Dorsolateral prefrontal cortex (tissue), 120 donors: ENCODE measurements at regions of chr14 and their contacts with region 1.

Region 1: GRCh38 chr14:69260861-69261564 is 1.1 kb downstream of the GALNT16 start:
- DNase-seq: peak in 3 of 10 donors; percentile 51 to 58 (median 51)
- H3K4me3 ChIP-seq: peak overlapping the region; percentile 43 to 85 (median 70)
- H3K27ac ChIP-seq: peak overlapping the region in 4 of 59 donors; percentile 7 to 69 (median 35)
- H3K27me3 ChIP-seq: peaks cover 0 to 25% (median 0%) of the 10 kb centered on the region in 45 donors
- CTCF ChIP-seq: peak in 54 of 56 donors; percentile 34 to 76 (median 60)

Region 2: DNA sequence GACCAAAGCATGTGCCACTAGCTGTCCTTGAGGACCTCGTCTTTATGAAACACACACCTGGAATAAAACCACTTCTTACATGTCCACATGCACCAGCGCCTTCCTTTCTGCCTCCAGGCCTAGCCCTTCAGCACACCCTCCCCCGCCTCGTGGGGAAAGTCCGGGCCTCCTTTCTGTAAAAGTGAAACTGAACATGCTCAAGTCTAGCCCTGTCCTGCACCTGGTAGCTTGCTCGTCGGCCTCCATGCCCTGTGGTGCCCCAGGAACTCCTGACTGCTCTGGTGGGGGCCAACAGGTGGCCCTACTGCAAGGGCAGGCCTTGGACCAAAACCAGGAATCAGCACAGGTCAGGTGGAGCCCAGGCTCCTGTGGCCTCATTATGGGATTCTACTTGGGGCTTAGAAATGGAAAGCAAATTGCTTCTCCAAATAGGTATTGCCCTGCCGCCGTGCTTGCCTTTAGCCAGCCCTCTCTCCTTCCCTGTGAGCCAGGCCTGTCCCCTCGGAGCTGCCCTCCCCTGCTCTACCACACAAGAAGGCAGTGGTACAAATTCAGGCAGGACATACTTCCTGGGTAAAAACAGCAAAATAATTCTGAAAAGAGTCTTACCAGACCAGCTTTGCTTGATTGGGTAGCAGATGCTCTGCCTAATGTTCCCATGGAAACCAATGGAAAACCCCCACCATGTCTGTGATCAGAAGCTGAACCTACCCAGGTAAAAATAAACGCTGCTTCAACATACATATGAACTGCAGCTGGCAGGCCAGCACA is 93.6 kb after region 1 on chr14:
- intact Hi-C with region 1: loop called in 1 of 2 experiments (anchors 10 kb)
- DNase-seq: peak in 1 of 10 donors; percentile 49
- H3K4me3 ChIP-seq: no peak overlapping the region
- H3K27ac ChIP-seq: peak overlapping the region in 57 of 59 donors; percentile 22 to 90 (median 79)
- H3K27me3 ChIP-seq: no peaks in the 10 kb centered on the region
- CTCF ChIP-seq: no peak